Gastrocnemius medialis (tissue), 4 donors: ENCODE measurements at regions of chr12 and their contacts with region 1.

Region 1: GRCh38 chr12:32755654-32756475 is at the start of gene YARS2:
- DNase-seq: peak; percentile 95 to 96
- ATAC-seq: peak; percentile 99 to 100
- H3K4me3 ChIP-seq: peak within 1 kb of the TSS; percentile 80 to 100 (median 96)
- H3K27ac ChIP-seq: peak within 1 kb of the TSS; percentile 81 to 88 (median 84)
- H3K4me1 ChIP-seq: peaks cover 12 to 15% of the 10 kb centered on the region in 2 donors
- H3K27me3 ChIP-seq: no peaks in the 10 kb centered on the region
- CTCF ChIP-seq: peak; percentile 74 to 92 (median 79)
- POLR2A ChIP-seq: peak in 1 of 2 donors; percentile 35
- total RNA-seq, gene YARS2: 9.1 to 19.4 (median 13.9) TPM

Region 2: DNA sequence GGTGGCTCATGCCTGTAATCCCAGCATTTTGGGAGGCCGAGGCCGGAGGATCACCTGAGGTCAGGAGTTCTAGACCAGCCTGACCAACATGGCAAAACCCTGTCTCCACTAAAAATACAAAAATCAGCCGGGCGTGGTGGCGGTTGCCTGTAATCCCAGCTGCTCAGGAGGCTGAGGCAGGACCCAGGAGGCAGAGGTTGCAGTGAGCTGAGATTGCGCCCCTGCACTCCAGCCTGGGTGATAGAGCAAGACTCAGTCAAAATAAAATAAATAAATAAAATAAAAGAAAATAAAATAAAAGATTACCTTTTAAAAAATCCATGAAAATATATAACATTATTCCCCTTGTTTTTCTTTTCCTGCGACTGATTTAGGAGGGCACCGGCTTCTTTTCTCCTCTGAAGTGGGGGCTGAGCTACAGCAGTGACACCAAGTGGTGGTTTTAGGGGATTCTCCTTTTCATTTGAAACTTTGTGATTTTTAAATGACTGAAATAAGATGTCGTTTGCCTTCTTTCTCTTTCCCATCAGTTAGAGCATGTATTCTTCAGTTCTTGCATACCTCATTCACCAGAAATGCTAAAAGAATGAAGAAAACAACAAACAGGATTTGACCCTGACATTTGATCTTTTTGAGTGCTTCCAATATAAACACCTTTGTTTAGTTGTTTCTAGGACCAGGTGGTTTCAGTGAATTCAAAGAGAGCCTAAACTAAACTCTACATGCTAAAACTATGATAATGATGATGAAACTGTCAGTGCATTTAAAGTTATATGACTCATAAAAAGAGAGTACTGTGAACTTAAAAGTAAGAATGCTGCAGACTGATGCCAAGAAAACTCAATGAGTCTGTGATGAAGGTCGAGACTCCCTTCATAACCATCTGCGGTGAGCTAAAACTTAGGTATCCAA is 163.3 kb after region 1 on chr12:
- in situ Hi-C with region 1: no loop called
- intact Hi-C with region 1: loop called (anchors 5 kb)
- DNase-seq: no peak
- ATAC-seq: no peak
- H3K4me3 ChIP-seq: no peak overlapping the region
- H3K27ac ChIP-seq: no peak overlapping the region
- H3K4me1 ChIP-seq: no peaks in the 10 kb centered on the region
- H3K27me3 ChIP-seq: no peaks in the 10 kb centered on the region
- CTCF ChIP-seq: peak in 1 of 5 experiments; percentile 24
- POLR2A ChIP-seq: no peak

Region 3: GRCh38 chr12:34022079-34022830 is 1266.4 kb after region 1 on chr12 and contains the start of gene ALG10:
- in situ Hi-C with region 1: loop called in 3 of 4 experiments (anchors 5 kb)
- intact Hi-C with region 1: loop called (anchors 1 kb)
- DNase-seq: peak; percentile 95 to 96
- ATAC-seq: peak; percentile 100
- H3K4me3 ChIP-seq: peak within 1 kb of the TSS; percentile 83 to 93 (median 88)
- H3K27ac ChIP-seq: peak within 1 kb of the TSS; percentile 84 to 91 (median 84)
- H3K4me1 ChIP-seq: peaks cover 14 to 18% of the 10 kb centered on the region in 2 donors
- H3K27me3 ChIP-seq: no peaks in the 10 kb centered on the region
- CTCF ChIP-seq: peak; percentile 60 to 85 (median 64)
- POLR2A ChIP-seq: no peak
- total RNA-seq, gene ALG10: 1.3 to 3.3 (median 3.0) TPM